Esophagus muscularis mucosa (tissue), 4 donors: ENCODE measurements at regions of chr9 and their contacts with region 1.

Region 1: DNA sequence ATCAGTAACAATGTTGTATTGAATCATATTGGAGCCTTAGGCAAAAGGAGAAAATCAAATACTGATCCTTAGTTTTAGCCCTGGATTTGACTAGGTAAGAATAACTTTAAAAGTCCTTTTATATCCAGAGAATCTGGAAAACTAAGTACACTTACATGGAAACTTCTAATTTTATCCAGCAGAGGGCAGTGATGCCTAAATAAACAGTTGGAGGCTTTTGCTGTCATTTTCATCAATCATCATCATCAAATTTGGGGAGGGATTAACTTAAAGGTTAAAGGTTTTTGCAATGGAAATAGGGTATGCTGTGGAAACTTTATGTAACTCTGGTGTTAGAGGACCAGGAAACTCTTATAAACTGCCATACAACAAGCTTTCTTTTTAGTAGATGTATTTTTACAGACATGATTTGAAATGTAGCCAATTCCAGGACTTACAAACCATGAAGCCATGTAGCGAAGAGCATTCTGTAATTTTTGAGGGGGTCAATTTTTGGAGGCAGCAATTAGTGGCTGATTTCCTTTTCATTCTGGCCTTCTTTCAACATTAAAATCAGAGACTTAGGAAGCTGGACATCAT is 112.7 kb downstream of the OSTF1 start:
- DNase-seq: no peak
- H3K4me3 ChIP-seq: no peak overlapping the region
- H3K27ac ChIP-seq: no peak overlapping the region
- H3K4me1 ChIP-seq: no peaks in the 10 kb centered on the region
- H3K27me3 ChIP-seq: no peaks in the 10 kb centered on the region
- CTCF ChIP-seq: peak; percentile 70 to 73 (median 72)
- EP300 ChIP-seq: no peak
- POLR2A ChIP-seq: no peak

Region 2: DNA sequence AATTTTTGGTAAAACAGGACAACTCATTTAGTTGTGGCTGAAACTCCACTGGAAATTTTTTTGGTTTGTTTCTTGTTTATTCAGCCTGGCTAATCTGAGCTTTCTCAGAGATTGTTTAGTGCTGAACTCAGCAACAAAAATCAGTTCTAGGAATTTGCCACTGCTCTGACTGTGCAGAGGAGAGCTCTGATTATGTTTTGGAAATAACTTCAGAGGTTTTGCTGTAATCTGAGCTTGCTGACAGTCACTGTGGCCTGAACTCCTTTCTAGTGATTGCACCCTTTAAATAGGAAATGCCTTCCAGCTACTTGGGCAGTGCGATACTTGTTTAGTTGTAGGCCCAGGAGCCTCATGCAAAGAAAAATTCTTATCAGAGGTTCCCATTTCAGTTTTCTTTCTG is 52.4 kb before region 1 on chr9:
- intact Hi-C with region 1: no loop called
- DNase-seq: no peak
- H3K4me3 ChIP-seq: no peak overlapping the region
- H3K27ac ChIP-seq: no peak overlapping the region
- H3K4me1 ChIP-seq: no peaks in the 10 kb centered on the region
- H3K27me3 ChIP-seq: no peaks in the 10 kb centered on the region
- CTCF ChIP-seq: no peak
- EP300 ChIP-seq: no peak
- POLR2A ChIP-seq: no peak

Region 3: DNA sequence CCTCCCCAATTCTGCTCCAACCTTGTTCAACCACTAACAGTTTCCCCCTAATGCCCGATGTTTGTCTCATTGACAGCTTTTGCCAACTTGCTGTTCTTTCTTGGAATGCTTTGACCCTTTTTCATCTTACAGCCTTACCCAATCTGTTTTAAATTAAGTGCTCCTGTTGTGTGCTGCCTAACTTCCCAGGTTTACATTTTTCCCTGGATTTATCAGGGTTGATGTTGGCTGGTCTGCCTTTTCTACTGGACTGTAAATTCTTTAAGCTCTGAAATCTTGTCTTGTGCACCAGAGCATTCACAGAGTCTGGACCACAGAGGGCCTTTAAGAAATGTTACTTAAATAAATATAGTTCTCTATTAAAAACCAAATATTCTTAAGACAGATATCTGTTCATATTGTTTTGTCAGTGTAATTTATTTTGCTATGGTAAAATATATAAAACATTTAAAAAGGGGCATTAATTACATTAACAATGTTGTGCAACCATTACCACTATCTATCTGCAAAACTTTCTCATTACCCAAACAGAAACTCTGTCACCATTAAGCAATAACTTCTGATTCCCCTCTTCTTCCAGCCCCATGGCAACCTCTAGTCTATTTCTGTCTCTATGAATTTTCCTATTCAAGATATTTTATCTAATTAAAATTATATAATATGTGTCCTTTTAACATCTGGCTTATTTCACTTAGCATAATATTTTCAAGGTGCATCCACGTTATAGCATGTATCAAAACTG is 39.7 kb before region 1 on chr9:
- intact Hi-C with region 1: no loop called
- DNase-seq: no peak
- H3K4me3 ChIP-seq: no peak overlapping the region
- H3K27ac ChIP-seq: no peak overlapping the region
- H3K4me1 ChIP-seq: no peaks in the 10 kb centered on the region
- H3K27me3 ChIP-seq: no peaks in the 10 kb centered on the region
- CTCF ChIP-seq: no peak
- EP300 ChIP-seq: no peak
- POLR2A ChIP-seq: no peak

Region 4: GRCh38 chr9:75238311-75238978 is 37.5 kb after region 1 on chr9:
- intact Hi-C with region 1: loop called (anchors 2 kb)
- DNase-seq: no peak
- H3K4me3 ChIP-seq: no peak overlapping the region
- H3K27ac ChIP-seq: no peak overlapping the region
- H3K4me1 ChIP-seq: peaks cover 0 to 13% (median 3%) of the 10 kb centered on the region in 4 donors
- H3K27me3 ChIP-seq: no peaks in the 10 kb centered on the region
- CTCF ChIP-seq: peak; percentile 70 to 81 (median 80)
- EP300 ChIP-seq: no peak
- POLR2A ChIP-seq: no peak

Region 5: DNA sequence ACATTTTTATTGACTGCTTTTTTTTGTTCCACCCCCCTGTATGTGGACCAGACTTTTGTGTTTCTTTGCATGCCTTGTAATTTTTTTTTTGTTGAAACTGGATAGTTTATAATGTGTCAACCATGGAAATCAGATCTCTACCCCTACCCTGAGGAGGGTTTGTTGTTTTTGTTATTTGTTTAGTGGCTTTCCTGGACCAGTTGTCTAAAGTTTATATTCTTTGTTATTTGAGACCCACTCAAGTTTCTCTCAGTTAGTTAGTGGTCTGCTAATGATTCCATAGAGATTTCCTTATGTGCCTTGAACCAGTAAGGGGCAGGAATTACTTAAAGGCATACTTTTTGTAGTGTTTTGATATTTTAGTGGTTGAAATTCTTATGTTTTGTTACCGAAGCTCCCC is 1299.1 kb after region 1 on chr9:
- intact Hi-C with region 1: no loop called
- DNase-seq: no peak
- H3K4me3 ChIP-seq: no peak overlapping the region
- H3K27ac ChIP-seq: no peak overlapping the region
- H3K4me1 ChIP-seq: no peaks in the 10 kb centered on the region
- H3K27me3 ChIP-seq: no peaks in the 10 kb centered on the region
- CTCF ChIP-seq: no peak
- EP300 ChIP-seq: no peak
- POLR2A ChIP-seq: no peak